ENCODE measurements at regions of chr5 and their contacts with region 1.

Region 1: GRCh38 chr5:82259172-82259800 is 18.9 kb downstream of the RPS23 start:
- DNase-seq: no peak
- H3K4me3 ChIP-seq: no peak overlapping the region
- CTCF ChIP-seq: peak; percentile 19

Region 2: DNA sequence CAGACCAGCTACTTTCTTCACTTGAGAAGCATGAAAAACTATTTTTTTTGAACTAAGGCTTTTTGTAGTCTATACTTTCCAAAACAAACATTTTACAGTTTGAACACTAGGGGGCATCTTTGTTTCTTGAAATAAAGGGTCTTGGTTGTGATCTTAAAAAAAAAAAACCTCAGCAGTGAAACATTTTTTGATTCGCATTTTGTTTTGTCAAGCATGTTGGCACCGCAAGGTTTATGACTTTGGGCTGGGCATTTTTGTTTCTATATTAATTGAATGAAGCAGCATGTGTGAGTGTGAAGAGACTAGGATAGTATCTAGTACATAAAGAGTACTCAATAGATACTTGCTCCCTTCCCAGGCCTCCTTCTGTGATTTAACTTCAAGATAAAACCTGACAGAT is 833.7 kb before region 1 on chr5:
- CTCF ChIA-PET with region 1: interaction called, 11 read pairs
- POLR2A ChIA-PET with region 1: no interaction called
- DNase-seq: no peak
- H3K4me3 ChIP-seq: no peak overlapping the region
- CTCF ChIP-seq: no peak

Region 3: GRCh38 chr5:82225525-82226172 is 33.6 kb before region 1 on chr5:
- CTCF ChIA-PET with region 1: interaction called, 11 read pairs
- POLR2A ChIA-PET with region 1: no interaction called
- DNase-seq: peak; percentile 29
- H3K4me3 ChIP-seq: no peak overlapping the region
- CTCF ChIP-seq: peak; percentile 70

Region 4: DNA sequence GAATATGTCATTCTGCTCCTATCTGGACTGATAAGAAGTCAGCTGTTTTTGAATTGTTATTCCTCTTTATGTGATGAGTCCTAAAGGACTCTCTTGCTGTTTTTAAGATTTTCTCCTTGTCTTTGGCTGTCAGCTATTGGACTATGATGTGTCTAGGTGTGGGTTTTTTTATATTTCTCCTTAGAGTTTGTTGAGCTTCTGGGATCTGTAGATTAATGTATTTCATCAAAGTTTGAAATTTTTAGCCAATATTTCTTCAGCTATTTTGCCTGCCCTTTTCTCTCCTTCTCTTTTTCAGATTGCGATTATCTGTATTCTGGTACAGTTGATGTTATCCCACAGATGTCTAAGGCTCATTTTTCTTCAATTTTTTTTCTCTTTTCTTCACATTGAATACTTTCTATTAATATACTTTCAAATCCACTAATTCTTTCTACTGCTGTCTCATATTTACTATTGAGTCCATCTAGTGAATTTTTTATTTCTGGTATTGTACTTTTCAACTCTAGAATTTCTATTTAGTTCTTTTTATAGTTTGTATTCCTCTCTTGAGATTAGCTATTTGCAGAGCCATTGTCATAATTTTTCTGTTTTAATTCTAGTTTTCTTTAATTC is 12.2 kb before region 1 on chr5:
- CTCF ChIA-PET with region 1: interaction called, 34 read pairs
- POLR2A ChIA-PET with region 1: no interaction called
- DNase-seq: no peak
- H3K4me3 ChIP-seq: no peak overlapping the region
- CTCF ChIP-seq: no peak

Region 5: DNA sequence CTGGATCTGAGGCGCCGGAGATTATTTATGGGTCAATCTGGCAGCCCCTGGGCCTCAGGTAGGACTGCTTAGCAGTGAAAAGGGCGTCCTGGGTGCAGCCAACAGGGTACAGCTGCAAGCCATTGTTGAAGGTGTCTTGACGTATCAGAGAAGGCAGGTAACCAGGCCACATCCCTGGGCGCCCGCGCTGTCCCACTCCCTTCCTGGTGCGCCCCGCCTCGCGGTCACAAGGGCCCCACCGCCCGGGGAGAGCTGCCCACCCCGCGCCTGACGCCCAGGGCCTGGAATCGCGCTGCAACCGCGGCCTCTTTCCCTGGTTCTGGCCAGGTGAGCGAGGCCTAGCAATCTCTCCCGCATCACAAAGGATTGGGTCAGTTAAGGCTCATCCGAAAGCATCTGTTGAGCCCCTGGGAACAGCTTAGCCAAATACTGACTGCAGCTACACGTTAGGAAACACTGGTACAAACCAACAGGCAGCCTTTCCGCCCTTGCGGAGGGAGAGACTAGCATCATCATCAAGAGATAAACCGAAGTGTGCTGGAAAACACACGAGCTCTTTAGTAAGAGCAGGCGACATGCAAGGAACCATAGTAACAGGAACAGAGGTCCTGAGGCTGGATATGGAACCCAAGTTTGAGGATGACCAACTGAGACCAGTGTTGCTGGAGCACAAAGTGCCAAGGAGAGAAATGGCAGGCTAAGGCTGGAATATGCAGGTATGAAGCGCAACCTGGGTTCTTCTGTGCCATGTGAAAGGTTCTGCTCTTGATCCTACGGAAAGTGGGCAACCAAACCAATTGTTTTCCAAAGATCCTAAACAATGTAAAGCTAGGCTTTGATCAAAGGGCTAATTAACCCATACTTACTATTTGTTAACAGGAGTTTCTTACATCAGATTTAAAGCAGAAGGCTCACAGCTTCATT is 15.3 kb after region 1 on chr5:
- CTCF ChIA-PET with region 1: interaction called, 30 read pairs
- POLR2A ChIA-PET with region 1: no interaction called
- DNase-seq: no peak
- H3K4me3 ChIP-seq: no peak overlapping the region
- CTCF ChIP-seq: no peak

Region 6: DNA sequence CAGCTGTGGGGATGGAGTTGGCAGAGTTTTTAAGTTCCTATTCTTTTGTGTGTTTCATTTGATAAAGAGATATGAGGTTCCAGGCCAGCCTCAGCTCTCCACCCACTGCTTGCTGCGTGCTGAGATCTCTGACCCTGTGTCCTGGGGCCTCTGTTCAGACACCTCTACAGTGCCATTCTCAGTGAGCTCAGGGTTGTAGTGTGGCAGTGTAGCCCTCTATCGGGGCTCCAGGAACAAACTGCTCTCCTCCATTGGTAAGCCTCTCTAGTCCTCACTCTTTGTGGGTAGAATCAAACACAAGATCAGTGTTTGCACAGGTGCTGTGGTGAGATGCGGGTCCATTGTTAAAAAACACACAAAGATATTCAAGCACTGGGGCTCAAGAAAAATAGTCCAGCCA is 405.4 kb after region 1 on chr5:
- CTCF ChIA-PET with region 1: no interaction called
- POLR2A ChIA-PET with region 1: no interaction called
- DNase-seq: no peak
- H3K4me3 ChIP-seq: no peak overlapping the region
- CTCF ChIP-seq: no peak